Vagina (tissue), 2 donors: ENCODE measurements at regions of chr5 and their contacts with region 1.

Region 1: GRCh38 chr5:139215107-139215975 is 17.2 kb upstream of the SIL1 start:
- DNase-seq: no peak
- H3K4me3 ChIP-seq: no peak overlapping the region
- H3K27ac ChIP-seq: no peak overlapping the region
- H3K4me1 ChIP-seq: peaks cover 4% of the 10 kb centered on the region
- H3K27me3 ChIP-seq: no peaks in the 10 kb centered on the region
- CTCF ChIP-seq: no peak
- POLR2A ChIP-seq: no peak

Region 2: GRCh38 chr5:139241139-139241538 is 25.8 kb after region 1 on chr5:
- intact Hi-C with region 1: loop called (anchors 2 kb)
- DNase-seq: no peak
- H3K4me3 ChIP-seq: no peak overlapping the region
- H3K27ac ChIP-seq: no peak overlapping the region
- H3K4me1 ChIP-seq: no peaks in the 10 kb centered on the region
- H3K27me3 ChIP-seq: no peaks in the 10 kb centered on the region
- CTCF ChIP-seq: no peak
- POLR2A ChIP-seq: no peak